Activated naive CD4-positive, alpha-beta T cell treated with anti-CD3 and anti-CD28 coated beads for 36 hours (primary cell): ENCODE measurements at regions of chr15 and their contacts with region 1.

Region 1: DNA sequence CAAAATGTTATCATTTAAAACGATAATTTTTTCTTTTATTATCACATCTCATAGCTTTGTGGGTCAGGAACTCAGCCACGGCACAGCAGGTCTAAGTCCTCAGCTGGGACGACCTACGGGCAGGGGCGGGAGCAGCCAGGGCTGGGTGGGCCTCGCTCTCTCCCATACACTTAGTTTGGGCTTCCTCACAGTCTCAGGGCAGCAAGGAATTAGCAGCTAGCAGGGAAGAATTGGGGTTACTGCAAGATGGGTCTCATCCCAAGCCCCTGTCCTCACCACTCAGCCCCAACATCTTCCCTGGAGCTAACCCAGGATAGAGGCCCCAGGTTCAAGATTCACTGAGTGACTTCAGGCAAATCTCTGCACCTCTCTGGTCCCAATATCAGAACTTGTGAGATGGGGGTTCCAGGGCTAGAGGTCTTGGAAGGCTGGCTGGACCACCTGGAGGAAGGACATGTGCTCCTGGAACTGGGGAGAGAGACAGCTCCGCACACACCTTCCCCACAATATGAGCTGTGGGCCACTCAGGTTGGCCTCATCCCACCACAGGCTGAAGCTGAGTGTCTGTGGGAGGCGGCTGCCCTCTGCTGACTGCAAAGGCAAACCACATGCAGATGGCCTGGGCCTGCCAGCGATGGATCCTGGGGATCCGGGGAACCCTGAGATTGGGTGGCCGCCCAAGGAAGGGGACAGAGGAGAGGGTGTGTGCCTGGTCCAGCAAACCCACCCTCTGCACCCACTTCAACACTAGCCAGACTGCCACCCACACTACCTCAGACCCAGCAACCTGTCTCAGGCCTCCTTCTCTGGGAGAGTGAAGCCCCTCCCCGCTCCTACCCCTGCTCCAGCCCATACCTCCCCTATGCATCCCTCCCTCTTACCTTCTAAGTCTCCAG is 45.0 kb downstream of the CYP11A1 start:
- DNase-seq: peak; percentile 68
- H3K4me3 Mint-ChIP-seq: no peak overlapping the region
- H3K27ac Mint-ChIP-seq: no peak overlapping the region
- H3K4me1 Mint-ChIP-seq: peaks cover 5% of the 10 kb centered on the region
- H3K27me3 Mint-ChIP-seq: no peaks in the 10 kb centered on the region

Region 2: GRCh38 chr15:74127260-74127953 is 195.0 kb before region 1 on chr15:
- CTCF ChIA-PET with region 1: interaction called, 7 read pairs
- intact Hi-C with region 1: loop called (anchors 1 kb)
- DNase-seq: peak; percentile 90
- H3K4me3 Mint-ChIP-seq: peak overlapping the region; percentile 15
- H3K27ac Mint-ChIP-seq: no peak overlapping the region
- H3K4me1 Mint-ChIP-seq: peaks cover 26% of the 10 kb centered on the region
- H3K27me3 Mint-ChIP-seq: peaks cover 57% of the 10 kb centered on the region

Region 3: DNA sequence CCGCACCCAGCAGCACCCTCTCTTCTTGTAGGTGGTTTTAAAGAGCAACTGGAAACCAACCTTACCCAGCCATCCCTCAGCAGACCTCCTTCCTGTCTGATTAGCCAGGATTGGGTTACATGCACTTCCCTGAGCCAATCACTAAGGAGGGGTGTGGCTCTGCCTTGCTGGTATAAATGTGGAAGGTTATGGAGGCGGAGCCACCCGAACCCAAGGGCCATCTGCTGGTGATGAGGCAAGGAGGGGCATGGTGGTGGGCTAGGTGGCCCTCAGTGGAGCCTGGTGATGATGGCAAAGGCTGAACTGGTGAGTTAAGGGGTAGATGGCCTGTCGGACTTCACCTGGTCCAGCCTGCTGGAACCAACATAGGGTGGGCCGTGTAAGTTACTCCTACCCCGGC is 46.5 kb before region 1 on chr15:
- CTCF ChIA-PET with region 1: no interaction called
- intact Hi-C with region 1: no loop called
- DNase-seq: no peak
- H3K4me3 Mint-ChIP-seq: no peak overlapping the region
- H3K27ac Mint-ChIP-seq: no peak overlapping the region
- H3K4me1 Mint-ChIP-seq: no peaks in the 10 kb centered on the region
- H3K27me3 Mint-ChIP-seq: peaks cover 4% of the 10 kb centered on the region

Region 4: DNA sequence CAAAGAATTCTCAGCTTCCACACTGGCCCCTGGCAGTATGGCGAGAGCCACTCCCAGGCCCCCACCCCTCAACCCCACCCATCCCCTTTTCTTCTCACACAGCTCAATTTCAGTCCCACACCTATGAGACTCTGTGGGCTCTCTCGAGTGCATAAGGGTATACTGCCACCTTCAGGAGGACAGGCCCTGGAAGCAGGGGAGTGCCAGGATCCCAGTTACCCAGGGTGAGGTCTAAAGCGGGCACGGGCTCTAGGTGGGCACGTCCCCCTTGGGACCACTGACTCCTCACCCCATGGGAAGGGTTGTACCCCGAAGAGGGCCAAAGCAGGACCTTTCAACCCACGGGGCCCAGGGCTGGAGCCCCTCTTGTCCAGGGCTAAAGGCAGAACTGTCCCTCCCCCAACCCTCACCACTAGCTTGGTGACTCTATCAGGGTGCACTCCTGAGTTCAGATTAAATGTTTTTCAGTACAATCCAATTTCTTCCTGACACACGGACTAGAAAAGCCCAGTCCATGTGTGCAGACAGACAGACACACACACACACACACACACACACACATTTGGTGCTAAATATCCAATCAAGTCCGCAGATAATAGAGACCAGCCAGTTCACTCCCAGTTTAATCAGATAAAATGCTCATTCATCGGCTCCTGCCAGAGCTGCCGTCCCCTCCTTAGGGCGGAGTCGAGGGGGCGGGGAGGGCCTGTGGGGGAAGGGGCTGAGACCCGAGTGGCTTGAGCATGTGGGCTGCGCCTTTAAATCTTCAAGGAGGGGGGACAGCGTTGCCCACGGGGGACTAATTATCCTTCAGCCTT is 14.4 kb before region 1 on chr15:
- CTCF ChIA-PET with region 1: interaction called, 23 read pairs
- intact Hi-C with region 1: no loop called
- DNase-seq: peak; percentile 61
- H3K4me3 Mint-ChIP-seq: no peak overlapping the region
- H3K27ac Mint-ChIP-seq: no peak overlapping the region
- H3K4me1 Mint-ChIP-seq: no peaks in the 10 kb centered on the region
- H3K27me3 Mint-ChIP-seq: peaks cover 10% of the 10 kb centered on the region

Region 5: GRCh38 chr15:74345051-74345450 is 22.6 kb after region 1 on chr15:
- CTCF ChIA-PET with region 1: no interaction called
- intact Hi-C with region 1: no loop called
- DNase-seq: no peak
- H3K4me3 Mint-ChIP-seq: no peak overlapping the region
- H3K27ac Mint-ChIP-seq: no peak overlapping the region
- H3K4me1 Mint-ChIP-seq: peaks cover 2% of the 10 kb centered on the region
- H3K27me3 Mint-ChIP-seq: no peaks in the 10 kb centered on the region

Region 6: GRCh38 chr15:74438721-74439316 is 116.4 kb after region 1 on chr15:
- CTCF ChIA-PET with region 1: no interaction called
- intact Hi-C with region 1: no loop called
- DNase-seq: peak; percentile 88
- H3K4me3 Mint-ChIP-seq: no peak overlapping the region
- H3K27ac Mint-ChIP-seq: peak overlapping the region; percentile 14
- H3K4me1 Mint-ChIP-seq: peaks cover 35% of the 10 kb centered on the region
- H3K27me3 Mint-ChIP-seq: no peaks in the 10 kb centered on the region

Region 7: GRCh38 chr15:75647370-75648155 is 1325.1 kb after region 1 on chr15 and contains the start of gene SNX33:
- CTCF ChIA-PET with region 1: no interaction called
- intact Hi-C with region 1: no loop called
- DNase-seq: peak; percentile 77
- H3K4me3 Mint-ChIP-seq: peak within 1 kb of the TSS; percentile 81
- H3K27ac Mint-ChIP-seq: peak within 1 kb of the TSS; percentile 7
- H3K4me1 Mint-ChIP-seq: peaks cover 18% of the 10 kb centered on the region
- H3K27me3 Mint-ChIP-seq: no peaks in the 10 kb centered on the region
- total RNA-seq, gene SNX33: 1.1 TPM